AG04449 (cell line): ENCODE measurements at regions of chr16 and their contacts with region 1.

Region 1: GRCh38 chr16:30956601-30957455 is 726 bp upstream of the SETD1A start:
- DNase-seq: no peak
- H3K4me3 ChIP-seq: peak overlapping the region; percentile 84
- CTCF ChIP-seq: peak; percentile 53

Region 2: DNA sequence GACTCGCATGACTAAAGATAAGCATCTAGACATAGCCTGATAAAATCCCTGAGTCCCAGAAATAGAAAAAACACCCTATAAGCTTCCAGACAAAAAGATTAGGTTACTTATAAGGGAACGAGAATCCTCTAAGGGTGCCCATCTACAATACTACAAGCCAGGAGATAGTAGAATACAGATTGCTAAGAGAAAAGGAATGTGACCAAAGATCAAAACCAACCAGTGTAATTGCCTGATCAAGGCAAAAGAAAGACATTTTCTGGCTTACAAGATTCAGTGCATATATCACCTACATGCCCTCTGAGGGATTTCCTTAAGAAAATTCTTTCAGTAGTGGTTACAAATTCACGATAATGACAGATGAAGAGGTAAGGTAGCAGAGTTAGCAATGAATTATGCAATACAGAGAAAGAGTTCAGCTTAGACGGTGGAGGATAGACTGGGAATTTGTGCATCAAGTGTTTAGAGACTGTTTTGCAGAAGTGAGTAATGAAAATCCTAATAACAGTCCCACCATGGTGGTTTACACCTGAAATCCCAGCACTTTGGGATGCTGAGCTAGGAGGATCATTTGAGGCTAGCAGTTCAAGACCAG is 97.9 kb before region 1 on chr16:
- CTCF ChIA-PET with region 1: no interaction called
- POLR2A ChIA-PET with region 1: no interaction called
- DNase-seq: no peak
- H3K4me3 ChIP-seq: no peak overlapping the region
- CTCF ChIP-seq: no peak

Region 3: DNA sequence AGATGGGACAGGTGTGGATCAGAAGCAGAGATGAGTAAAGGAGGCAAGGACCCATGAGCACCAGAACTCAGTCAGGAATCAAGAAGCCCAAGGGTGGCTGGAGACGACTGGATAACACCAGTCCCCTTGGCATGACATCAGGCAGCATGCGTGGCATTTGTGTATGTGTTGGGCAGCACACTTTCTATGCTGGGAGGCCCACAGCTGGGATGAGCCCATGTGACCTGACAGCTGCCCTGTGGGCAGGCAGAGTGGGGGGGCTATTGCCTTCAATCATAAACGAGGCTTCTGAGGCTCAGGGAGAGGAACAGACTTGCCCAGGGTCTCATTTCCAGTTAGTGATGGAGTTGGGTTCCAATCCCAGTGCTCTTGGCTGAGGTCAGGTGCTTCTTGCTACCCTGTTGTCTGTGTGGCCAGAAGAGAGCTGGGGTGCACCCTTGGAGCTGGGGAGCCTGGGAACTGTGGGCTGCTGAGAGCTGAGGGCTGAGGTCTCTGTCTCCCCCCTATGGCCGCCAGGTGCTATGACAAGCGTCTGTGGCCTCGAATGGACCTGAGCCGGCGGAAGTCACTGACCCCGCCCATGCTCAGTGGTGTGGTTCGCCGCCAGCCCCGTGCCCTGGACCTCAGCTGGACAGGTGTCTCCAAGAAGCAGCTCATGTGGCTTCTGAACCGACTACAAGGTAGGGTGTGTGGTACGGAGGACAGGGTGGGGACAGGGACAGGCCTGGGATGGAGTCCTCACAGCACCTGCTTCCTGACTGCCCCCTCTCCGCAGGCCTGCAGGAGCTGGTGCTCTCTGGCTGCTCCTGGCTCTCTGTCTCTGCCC is 15.0 kb before region 1 on chr16:
- CTCF ChIA-PET with region 1: interaction called, 103 read pairs
- POLR2A ChIA-PET with region 1: interaction called, 3 read pairs
- DNase-seq: no peak
- H3K4me3 ChIP-seq: no peak overlapping the region
- CTCF ChIP-seq: peak; percentile 88

Region 4: GRCh38 chr16:31099860-31100638 is 143.2 kb after region 1 on chr16:
- CTCF ChIA-PET with region 1: interaction called, 59 read pairs
- POLR2A ChIA-PET with region 1: no interaction called
- DNase-seq: no peak
- H3K4me3 ChIP-seq: no peak overlapping the region
- CTCF ChIP-seq: no peak

Region 5: DNA sequence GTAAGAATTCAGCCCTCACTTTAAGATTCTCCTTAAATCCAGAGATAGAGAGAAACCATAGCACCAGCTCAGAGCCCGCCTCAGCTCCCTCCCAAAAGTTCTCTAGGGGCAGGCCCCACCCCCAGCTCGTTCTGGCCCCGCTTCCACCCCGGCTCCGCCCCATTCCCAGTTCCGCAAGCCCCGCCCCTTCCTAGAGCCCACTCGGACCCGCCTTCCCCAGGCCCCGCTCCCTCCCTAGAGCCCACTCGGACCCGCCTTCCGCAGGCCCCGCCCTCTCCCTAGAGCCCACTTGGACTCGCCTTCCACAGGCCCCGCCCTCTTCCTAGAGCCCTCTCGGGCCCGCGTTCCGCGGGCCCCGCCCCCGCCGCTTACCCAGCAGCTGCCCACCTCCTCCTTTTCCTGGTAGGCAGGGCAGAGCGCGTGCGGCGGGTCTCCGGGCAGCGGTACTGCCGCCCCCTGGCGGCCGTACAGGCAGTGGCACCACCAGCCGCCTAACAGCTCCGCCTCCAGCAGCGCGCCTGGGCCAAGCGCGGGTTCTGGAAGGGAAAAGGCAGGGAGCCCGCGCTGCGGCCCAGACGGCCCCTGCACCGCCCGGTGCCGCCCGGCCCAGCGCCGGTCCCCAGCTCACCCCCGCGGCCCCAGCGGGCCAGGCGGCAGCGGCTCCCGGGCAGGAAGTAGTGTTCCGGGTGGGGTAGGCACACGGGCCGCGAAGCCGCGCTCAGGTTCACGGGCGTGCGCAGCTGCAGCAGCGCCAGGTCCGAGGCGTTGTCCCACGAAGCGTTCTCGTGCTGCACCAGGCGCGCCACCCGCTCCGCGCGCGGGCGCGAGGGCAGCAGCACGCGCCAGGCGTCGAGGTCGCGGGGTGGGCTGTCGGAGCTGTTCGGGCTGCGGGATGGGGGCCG is 185.5 kb after region 1 on chr16:
- CTCF ChIA-PET with region 1: interaction called, 45 read pairs
- POLR2A ChIA-PET with region 1: no interaction called
- DNase-seq: peak; percentile 84
- H3K4me3 ChIP-seq: peak overlapping the region; percentile 57
- CTCF ChIP-seq: peak; percentile 99

Region 6: GRCh38 chr16:31440516-31441184 is 483.8 kb after region 1 on chr16:
- CTCF ChIA-PET with region 1: interaction called, 24 read pairs
- POLR2A ChIA-PET with region 1: no interaction called
- DNase-seq: no peak
- H3K4me3 ChIP-seq: no peak overlapping the region
- CTCF ChIP-seq: no peak

Region 7: DNA sequence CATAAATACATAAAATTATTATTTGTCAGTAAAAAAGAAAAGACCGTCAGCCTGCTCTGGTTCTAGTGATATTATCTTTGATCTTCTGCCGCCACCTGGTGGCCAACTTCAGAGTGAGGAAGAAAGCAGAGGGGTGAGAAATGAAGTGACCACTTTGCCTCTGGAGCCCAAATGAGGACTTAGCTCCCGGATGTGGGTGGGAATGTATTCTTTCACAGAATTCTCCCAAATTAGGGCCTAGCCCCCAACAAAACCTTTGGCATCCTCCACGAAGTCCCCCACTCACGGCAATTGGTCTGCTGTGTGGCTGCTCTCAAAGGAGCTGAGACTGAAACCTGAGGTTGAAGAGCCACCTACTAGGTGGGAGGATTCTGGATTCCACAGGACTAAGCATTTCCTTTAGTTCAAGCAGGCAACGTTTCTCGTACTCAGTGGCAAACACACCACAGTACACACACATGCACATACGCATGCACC is 911.9 kb after region 1 on chr16:
- CTCF ChIA-PET with region 1: interaction called, 25 read pairs
- POLR2A ChIA-PET with region 1: no interaction called
- DNase-seq: no peak
- H3K4me3 ChIP-seq: no peak overlapping the region
- CTCF ChIP-seq: peak; percentile 66